Dorsolateral prefrontal cortex (tissue), 120 donors: ENCODE measurements at regions of chr14 and their contacts with region 1.

Region 1: DNA sequence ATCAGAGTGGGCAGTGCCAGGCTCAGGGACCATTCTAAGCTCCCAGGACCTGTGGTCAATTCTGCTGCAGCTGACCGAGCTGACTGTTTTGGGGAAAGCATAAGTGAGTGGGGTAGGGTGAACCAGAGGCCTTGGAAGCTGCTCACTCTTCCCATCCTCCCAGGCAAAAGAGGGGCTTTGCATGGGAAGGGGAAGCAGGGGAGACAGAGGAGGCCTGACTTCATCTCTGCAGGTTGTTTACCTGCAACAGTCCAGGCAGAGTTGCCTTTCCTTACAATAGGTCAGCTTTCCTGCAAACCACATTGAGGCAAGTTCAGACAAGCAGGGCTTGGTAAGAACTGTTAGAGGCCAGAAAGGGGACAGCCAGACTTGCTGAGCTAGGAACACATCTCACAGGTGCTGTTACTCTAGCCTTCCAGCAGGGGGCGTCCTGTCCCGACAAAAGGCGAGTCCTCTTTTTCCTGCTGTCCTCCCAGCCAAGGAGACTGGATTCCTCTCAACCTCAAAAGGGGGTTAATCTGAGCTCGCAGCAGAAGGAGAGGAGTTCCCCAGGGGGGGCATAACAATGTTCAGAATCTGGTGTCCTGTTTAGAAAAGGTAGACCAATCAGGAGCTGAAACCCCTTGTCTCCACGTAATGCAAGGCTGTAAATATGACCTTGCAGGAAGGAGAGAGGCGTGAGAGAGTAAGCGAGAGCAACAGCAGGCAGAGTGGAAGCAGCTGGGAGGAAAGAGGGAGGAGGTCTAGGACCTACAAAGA is 4.3 kb upstream of the DHRS2 start:
- DNase-seq: peak; percentile 52 to 86 (median 74)
- H3K4me3 ChIP-seq: peak overlapping the region in 14 of 59 donors; percentile 2 to 46 (median 28)
- H3K27ac ChIP-seq: peak overlapping the region in 18 of 59 donors; percentile 7 to 63 (median 41)
- H3K27me3 ChIP-seq: no peaks in the 10 kb centered on the region
- CTCF ChIP-seq: peak; percentile 70 to 98 (median 93)

Region 2: GRCh38 chr14:23237772-23238594 is 393.9 kb before region 1 on chr14 and contains the start of gene RNF212B:
- intact Hi-C with region 1: no loop called
- DNase-seq: peak; percentile 42 to 90 (median 73)
- H3K4me3 ChIP-seq: peak within 1 kb of the TSS; percentile 18 to 67 (median 50)
- H3K27ac ChIP-seq: peak within 1 kb of the TSS in 9 of 59 donors; percentile 13 to 68 (median 41)
- H3K27me3 ChIP-seq: no peaks in the 10 kb centered on the region
- CTCF ChIP-seq: peak in 4 of 56 donors; percentile 10 to 18 (median 18)
- total RNA-seq, gene RNF212B: 0.91 TPM in 1 of 120 experiments, not detected in the others

Region 3: GRCh38 chr14:23929822-23930294 is 298.0 kb after region 1 on chr14:
- intact Hi-C with region 1: loop called (anchors 2 to 5 kb)
- DNase-seq: peak; percentile 63 to 89 (median 82)
- H3K4me3 ChIP-seq: peak overlapping the region in 44 of 59 donors; percentile 1 to 55 (median 30)
- H3K27ac ChIP-seq: peak overlapping the region in 10 of 59 donors; percentile 9 to 49 (median 35)
- H3K27me3 ChIP-seq: no peaks in the 10 kb centered on the region
- CTCF ChIP-seq: peak; percentile 87 to 99 (median 92)

Region 4: GRCh38 chr14:23953464-23954278 is 321.8 kb after region 1 on chr14 and contains the start of gene DHRS4:
- intact Hi-C with region 1: loop called in 1 of 2 experiments (anchors 5 kb)
- DNase-seq: peak; percentile 55 to 89 (median 78)
- H3K4me3 ChIP-seq: peak within 1 kb of the TSS; percentile 37 to 98 (median 85)
- H3K27ac ChIP-seq: peak within 1 kb of the TSS in 58 of 59 donors; percentile 21 to 96 (median 89)
- H3K27me3 ChIP-seq: no peaks in the 10 kb centered on the region
- CTCF ChIP-seq: peak; percentile 42 to 93 (median 86)
- total RNA-seq, gene DHRS4: 6.3 to 22.2 (median 12.8) TPM